Activated CD4-positive, alpha-beta T cell treated with anti-CD3 and anti-CD28 coated beads for 36 hours (primary cell): ENCODE measurements at regions of chr14 and their contacts with region 1.

Region 1: GRCh38 chr14:75660630-75661494 is at the starts of genes ERG28 and TTLL5:
- DNase-seq: peak; percentile 97
- ATAC-seq: peak; percentile 99
- H3K4me3 Mint-ChIP-seq: peak within 1 kb of the TSS; percentile 96
- H3K27ac Mint-ChIP-seq: peak within 1 kb of the TSS; percentile 99
- H3K4me1 Mint-ChIP-seq: peaks cover 17% of the 10 kb centered on the region
- H3K27me3 Mint-ChIP-seq: no peaks in the 10 kb centered on the region
- total RNA-seq, gene ERG28: 19.1 to 23.7 TPM
- total RNA-seq, gene TTLL5: 27.3 to 38.6 TPM

Region 2: GRCh38 chr14:75002392-75003249 is 658.2 kb before region 1 on chr14 and contains the start of gene EIF2B2:
- CTCF ChIA-PET with region 1: no interaction called
- POLR2A ChIA-PET with region 1: no interaction called
- intact Hi-C with region 1: loop called in 1 of 2 experiments (anchors 1 kb)
- DNase-seq: peak; percentile 99
- ATAC-seq: peak; percentile 97
- H3K4me3 Mint-ChIP-seq: peak within 1 kb of the TSS; percentile 87
- H3K27ac Mint-ChIP-seq: peak within 1 kb of the TSS; percentile 88
- H3K4me1 Mint-ChIP-seq: peaks cover 34% of the 10 kb centered on the region
- H3K27me3 Mint-ChIP-seq: no peaks in the 10 kb centered on the region
- total RNA-seq, gene EIF2B2: 55.6 to 69.8 TPM

Region 3: GRCh38 chr14:75278422-75279161 is 382.3 kb before region 1 on chr14 and contains the start of gene FOS:
- CTCF ChIA-PET with region 1: no interaction called
- POLR2A ChIA-PET with region 1: no interaction called
- intact Hi-C with region 1: loop called in 1 of 2 experiments (anchors 1 kb)
- DNase-seq: peak; percentile 92
- ATAC-seq: peak; percentile 91
- H3K4me3 Mint-ChIP-seq: peak within 1 kb of the TSS; percentile 85
- H3K27ac Mint-ChIP-seq: peak within 1 kb of the TSS; percentile 95
- H3K4me1 Mint-ChIP-seq: peaks cover 44% of the 10 kb centered on the region
- H3K27me3 Mint-ChIP-seq: peaks cover 24% of the 10 kb centered on the region
- total RNA-seq, gene FOS: 16.0 to 21.1 TPM

Region 4: DNA sequence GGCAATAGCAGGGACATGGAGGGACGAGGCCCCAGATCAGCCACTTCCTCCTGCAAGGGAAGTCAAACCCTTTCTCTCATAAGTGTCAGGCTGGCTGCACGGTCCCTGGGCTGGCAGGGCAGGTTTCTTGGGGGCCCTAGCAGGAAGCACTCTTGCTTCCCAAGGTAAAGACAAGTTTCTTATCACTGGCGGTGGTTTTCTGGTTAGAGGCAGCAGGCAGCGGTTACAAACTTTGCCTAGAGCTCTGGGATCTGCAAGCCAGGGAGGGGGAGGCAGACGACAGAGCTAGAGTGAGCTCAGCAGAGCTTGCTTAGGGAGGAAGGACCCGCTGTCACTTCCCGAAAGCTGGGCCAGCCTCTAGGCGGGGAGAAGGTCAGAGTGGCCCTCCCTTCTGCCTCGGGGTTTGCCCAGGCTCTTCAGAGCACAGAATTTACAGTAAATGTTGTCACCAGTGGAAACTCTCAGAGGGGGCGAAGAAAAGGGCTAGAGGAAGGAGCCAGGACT is 118.2 kb before region 1 on chr14:
- CTCF ChIA-PET with region 1: no interaction called
- POLR2A ChIA-PET with region 1: interaction called, 6 read pairs
- intact Hi-C with region 1: loop called in 1 of 2 experiments (anchors 1 kb)
- DNase-seq: peak; percentile 95
- ATAC-seq: peak; percentile 86
- H3K4me3 Mint-ChIP-seq: peak overlapping the region; percentile 59
- H3K27ac Mint-ChIP-seq: peak overlapping the region; percentile 98
- H3K4me1 Mint-ChIP-seq: peaks cover 85% of the 10 kb centered on the region
- H3K27me3 Mint-ChIP-seq: no peaks in the 10 kb centered on the region

Region 5: GRCh38 chr14:75703467-75703866 is 42.6 kb after region 1 on chr14:
- CTCF ChIA-PET with region 1: no interaction called
- POLR2A ChIA-PET with region 1: no interaction called
- intact Hi-C with region 1: no loop called
- DNase-seq: no peak
- ATAC-seq: no peak
- H3K4me3 Mint-ChIP-seq: no peak overlapping the region
- H3K27ac Mint-ChIP-seq: no peak overlapping the region
- H3K4me1 Mint-ChIP-seq: peaks cover 4% of the 10 kb centered on the region
- H3K27me3 Mint-ChIP-seq: no peaks in the 10 kb centered on the region

Region 6: GRCh38 chr14:75725481-75725880 is 64.6 kb after region 1 on chr14:
- CTCF ChIA-PET with region 1: no interaction called
- POLR2A ChIA-PET with region 1: no interaction called
- intact Hi-C with region 1: no loop called
- DNase-seq: no peak
- ATAC-seq: no peak
- H3K4me3 Mint-ChIP-seq: no peak overlapping the region
- H3K27ac Mint-ChIP-seq: no peak overlapping the region
- H3K4me1 Mint-ChIP-seq: peaks cover 10% of the 10 kb centered on the region
- H3K27me3 Mint-ChIP-seq: no peaks in the 10 kb centered on the region

Region 7: DNA sequence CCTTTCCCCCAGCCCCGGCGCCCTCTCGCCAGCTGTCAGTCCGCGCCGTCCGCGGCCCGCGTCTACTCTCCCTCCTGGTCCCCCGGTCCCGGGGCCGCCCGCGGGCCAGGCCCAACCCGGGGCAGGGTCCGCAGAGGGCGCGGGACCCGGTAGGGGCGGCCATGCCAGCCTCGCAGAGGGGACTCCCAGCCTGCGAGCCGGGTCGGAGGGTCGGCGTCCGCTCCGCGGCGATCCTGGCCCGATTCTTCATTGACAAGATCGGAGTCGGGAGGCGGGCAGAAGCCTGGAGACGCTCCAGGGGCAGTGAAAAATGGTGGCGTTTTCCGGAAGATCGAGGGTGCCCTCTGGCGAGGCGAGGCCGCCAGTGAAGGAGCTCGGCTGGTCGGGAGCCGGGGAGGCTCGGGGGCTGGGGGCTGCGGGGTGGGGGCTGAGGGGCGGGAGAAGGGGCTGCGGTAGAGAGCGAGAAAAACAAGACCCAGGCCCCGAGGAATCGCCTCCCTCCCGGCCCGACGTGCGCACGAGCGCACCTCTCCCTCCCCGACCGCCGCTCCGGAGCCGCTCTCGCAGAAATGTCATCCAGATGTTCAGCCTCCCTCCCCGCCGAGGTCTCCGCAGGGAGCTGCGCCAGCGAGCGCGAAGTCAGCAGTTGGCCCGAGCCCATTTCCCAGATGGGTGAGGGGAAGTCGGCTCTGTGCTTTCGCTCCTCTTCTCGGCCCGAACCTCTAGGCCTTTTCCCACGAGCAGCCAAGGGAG is 321.6 kb after region 1 on chr14:
- CTCF ChIA-PET with region 1: interaction called, 4 read pairs
- POLR2A ChIA-PET with region 1: no interaction called
- intact Hi-C with region 1: loop called (anchors 1 to 5 kb)
- DNase-seq: peak; percentile 86
- ATAC-seq: peak; percentile 62
- H3K4me3 Mint-ChIP-seq: peak overlapping the region; percentile 67
- H3K27ac Mint-ChIP-seq: peak overlapping the region; percentile 78
- H3K4me1 Mint-ChIP-seq: peaks cover 42% of the 10 kb centered on the region
- H3K27me3 Mint-ChIP-seq: no peaks in the 10 kb centered on the region